Activated T-helper 1 cell treated with anti-CD3 and anti-CD28 coated beads, Interleukin-12 subunit alpha, Interleukin-12 subunit beta, Interleukin-2, Interleukin-4 antibody, amounts not matched to agents 30 ng/mL and 10 ng/mL and 1 ng/mL, durations not matched to agents 14 hours and 24 hours and 36 hours (primary cell): ENCODE measurements at regions of chr2 and their contacts with region 1.

Region 1: DNA sequence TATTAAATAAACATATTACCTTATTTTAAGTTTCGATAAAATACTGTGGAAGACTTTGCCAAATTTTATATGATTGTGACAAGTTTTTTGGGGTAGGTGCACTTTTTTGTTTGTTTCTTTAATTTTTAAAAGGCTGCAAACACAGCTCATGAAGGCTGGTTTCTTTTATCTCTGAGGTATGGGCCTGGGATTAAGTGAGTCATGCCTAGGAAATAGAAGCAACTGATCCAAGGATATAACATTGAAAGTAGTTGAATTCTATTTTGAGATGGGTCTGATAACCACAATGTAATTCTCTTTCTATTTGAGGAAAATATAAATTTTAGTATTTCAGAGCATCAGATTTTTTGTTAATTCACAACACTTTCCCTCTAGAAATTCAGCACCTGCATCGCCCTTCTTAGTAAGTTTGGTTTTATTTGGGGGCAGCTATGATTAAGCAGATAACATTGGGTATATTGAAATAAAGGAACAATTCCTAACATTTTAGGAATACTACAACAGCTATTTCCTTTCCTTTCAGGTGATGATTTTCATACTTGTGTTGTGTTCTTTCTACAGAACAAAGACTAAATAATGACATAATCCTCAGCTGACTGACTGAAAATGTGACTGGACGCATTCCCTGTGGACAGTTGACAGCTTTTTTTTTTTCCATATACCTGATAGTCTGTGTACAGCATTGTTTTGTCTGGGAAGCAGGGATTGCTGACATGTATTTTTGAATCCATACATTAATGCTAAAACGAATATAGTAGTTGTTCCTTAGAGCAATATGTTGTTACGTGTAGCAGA is 16.8 kb downstream of the RBM45 start:
- DNase-seq: no peak
- H3K4me3 Mint-ChIP-seq: no peak overlapping the region
- H3K27ac Mint-ChIP-seq: no peak overlapping the region
- H3K4me1 Mint-ChIP-seq: peaks cover 6% of the 10 kb centered on the region
- H3K27me3 Mint-ChIP-seq: no peaks in the 10 kb centered on the region

Region 2: GRCh38 chr2:178163395-178163794 is 34.4 kb after region 1 on chr2:
- intact Hi-C with region 1: no loop called
- DNase-seq: no peak
- H3K4me3 Mint-ChIP-seq: no peak overlapping the region
- H3K27ac Mint-ChIP-seq: no peak overlapping the region
- H3K4me1 Mint-ChIP-seq: no peaks in the 10 kb centered on the region
- H3K27me3 Mint-ChIP-seq: peaks cover 9% of the 10 kb centered on the region

Region 3: DNA sequence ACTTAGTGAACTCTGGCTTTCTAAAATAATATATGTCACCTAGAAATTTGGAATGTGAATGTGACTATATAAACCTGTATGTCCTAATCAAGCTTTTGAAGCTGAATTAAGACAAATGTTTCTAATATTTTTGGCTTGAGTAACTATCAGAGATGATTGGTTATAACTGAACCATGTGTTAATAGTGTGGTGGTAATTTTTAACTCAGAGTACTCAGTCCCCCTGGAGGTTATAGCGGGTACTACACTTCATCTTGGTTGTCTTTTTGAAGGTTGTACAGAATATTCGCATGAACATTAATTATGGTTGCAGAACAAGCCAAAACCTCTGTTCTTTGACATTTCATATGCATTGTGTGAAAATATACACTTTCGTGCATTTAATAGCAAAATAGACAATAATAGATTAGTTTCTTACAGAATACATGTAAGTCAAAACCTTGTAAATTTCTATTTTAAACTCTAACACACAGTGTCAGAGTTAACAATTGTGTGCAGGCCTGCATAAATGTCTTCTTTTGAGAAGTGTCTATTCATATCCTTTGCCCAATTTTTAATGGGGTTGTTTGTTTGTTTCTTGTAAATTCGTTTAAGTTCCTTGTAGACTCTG is 151.3 kb after region 1 on chr2:
- intact Hi-C with region 1: loop called (anchors 1 kb)
- DNase-seq: peak; percentile 12
- H3K4me3 Mint-ChIP-seq: no peak overlapping the region
- H3K27ac Mint-ChIP-seq: no peak overlapping the region
- H3K4me1 Mint-ChIP-seq: no peaks in the 10 kb centered on the region
- H3K27me3 Mint-ChIP-seq: peaks cover 10% of the 10 kb centered on the region